Tibial artery (tissue), 4 donors: ENCODE measurements at regions of chr2 and their contacts with region 1.

Region 1: GRCh38 chr2:130169896-130170295 is 11.5 kb downstream of the SMPD4 start:
- DNase-seq: no peak
- H3K4me3 ChIP-seq: no peak overlapping the region
- H3K27ac ChIP-seq: no peak overlapping the region
- H3K4me1 ChIP-seq: no peaks in the 10 kb centered on the region
- H3K27me3 ChIP-seq: no peaks in the 10 kb centered on the region
- CTCF ChIP-seq: no peak

Region 2: DNA sequence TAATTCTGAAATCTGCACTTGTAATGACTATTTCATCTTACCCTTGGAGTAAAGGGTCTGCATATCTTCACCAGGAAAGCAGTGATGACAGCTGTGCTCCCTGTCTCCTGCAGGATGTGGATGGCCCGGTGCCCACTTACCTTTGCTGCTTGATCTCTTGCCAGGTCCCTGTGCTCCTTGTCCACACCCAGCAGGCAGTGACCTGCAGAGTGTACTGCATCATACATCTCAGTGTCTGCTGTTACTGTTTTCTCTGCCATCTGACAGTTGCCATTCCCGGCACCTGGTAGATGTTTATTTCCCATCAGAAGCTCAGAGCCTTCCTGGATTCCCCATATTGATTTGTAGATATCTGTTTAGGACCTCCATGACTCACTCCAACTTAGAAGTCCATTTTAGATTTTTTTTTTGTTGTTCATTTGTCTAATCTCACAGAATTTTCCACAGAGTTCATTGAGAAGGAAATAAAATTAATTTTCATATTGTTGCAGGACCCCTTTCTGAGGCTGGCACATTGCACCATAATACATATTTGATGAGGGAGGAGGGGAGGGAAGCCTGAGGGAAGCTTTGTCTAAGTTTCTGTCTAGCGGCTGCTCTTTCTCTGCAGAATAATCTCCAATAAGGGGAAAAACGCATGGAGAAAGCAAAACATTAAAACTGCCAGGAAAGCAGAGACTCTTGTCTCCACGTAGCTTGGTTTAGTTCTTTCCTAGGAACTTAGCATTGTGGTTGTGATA is 887.9 kb before region 1 on chr2:
- intact Hi-C with region 1: loop called (anchors 5 kb)
- DNase-seq: no peak
- H3K4me3 ChIP-seq: no peak overlapping the region
- H3K27ac ChIP-seq: no peak overlapping the region
- H3K4me1 ChIP-seq: no peaks in the 10 kb centered on the region
- H3K27me3 ChIP-seq: no peaks in the 10 kb centered on the region
- CTCF ChIP-seq: no peak

Region 3: GRCh38 chr2:129877289-129877779 is 292.6 kb before region 1 on chr2:
- intact Hi-C with region 1: no loop called
- DNase-seq: peak; percentile 93 to 95
- H3K4me3 ChIP-seq: peak overlapping the region; percentile 60 to 66
- H3K27ac ChIP-seq: peak overlapping the region; percentile 72 to 74
- H3K4me1 ChIP-seq: peaks cover 0 to 11% (median 7%) of the 10 kb centered on the region in 4 donors
- H3K27me3 ChIP-seq: no peaks in the 10 kb centered on the region
- CTCF ChIP-seq: no peak

Region 4: DNA sequence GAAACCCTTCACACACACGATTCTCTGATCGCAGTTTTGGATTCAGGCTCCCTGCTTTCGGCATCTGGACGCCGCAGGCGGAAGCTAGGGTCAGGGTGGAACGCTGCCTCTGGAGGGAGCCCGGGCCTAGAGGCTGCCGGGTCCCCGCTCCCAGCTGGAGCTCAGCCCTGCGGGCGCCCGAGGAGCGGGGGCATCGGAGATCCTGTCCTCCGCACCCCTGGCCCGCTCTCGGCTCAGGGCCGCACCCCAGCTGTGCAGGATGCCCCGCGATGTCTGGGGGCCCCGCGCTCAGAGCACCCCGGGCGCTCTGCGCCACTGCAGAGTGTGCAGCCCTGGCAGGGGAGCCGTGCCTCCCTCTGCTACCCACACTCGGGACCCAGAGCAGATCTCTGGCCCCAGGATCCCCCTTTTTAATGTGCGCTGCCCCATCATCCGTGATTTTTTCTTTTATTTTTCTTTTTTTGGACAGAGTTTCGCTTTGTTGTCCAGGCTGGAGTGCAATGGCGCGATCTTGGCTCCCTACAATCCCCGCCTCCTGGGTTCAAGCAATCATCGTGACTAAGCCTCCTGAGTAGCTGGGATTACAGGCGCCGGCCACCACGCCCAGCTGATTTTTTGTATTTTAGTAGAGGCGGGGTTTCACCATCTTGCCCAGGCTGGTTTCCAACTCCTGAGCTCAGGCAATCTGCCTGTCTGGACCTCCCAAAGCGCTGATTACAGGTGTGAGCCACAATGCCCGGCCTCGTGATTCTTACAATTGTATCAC is 83.2 kb after region 1 on chr2:
- intact Hi-C with region 1: no loop called
- DNase-seq: no peak
- H3K4me3 ChIP-seq: peak overlapping the region in 1 of 2 donors; percentile 33
- H3K27ac ChIP-seq: no peak overlapping the region
- H3K4me1 ChIP-seq: peaks cover 0 to 9% (median 0%) of the 10 kb centered on the region in 4 donors
- H3K27me3 ChIP-seq: peaks cover 0 to 35% of the 10 kb centered on the region in 2 donors
- CTCF ChIP-seq: no peak

Region 5: GRCh38 chr2:130355578-130356431 is 185.9 kb after region 1 on chr2 and contains the start of gene PTPN18:
- intact Hi-C with region 1: no loop called
- DNase-seq: peak; percentile 88 to 95
- H3K4me3 ChIP-seq: peak within 1 kb of the TSS; percentile 81 to 84
- H3K27ac ChIP-seq: peak within 1 kb of the TSS; percentile 72 to 90
- H3K4me1 ChIP-seq: peaks cover 0 to 27% (median 21%) of the 10 kb centered on the region in 4 donors
- H3K27me3 ChIP-seq: no peaks in the 10 kb centered on the region
- CTCF ChIP-seq: peak; percentile 56 to 57